ENCODE measurements at regions of chr2 and their contacts with region 1.

Region 1: DNA sequence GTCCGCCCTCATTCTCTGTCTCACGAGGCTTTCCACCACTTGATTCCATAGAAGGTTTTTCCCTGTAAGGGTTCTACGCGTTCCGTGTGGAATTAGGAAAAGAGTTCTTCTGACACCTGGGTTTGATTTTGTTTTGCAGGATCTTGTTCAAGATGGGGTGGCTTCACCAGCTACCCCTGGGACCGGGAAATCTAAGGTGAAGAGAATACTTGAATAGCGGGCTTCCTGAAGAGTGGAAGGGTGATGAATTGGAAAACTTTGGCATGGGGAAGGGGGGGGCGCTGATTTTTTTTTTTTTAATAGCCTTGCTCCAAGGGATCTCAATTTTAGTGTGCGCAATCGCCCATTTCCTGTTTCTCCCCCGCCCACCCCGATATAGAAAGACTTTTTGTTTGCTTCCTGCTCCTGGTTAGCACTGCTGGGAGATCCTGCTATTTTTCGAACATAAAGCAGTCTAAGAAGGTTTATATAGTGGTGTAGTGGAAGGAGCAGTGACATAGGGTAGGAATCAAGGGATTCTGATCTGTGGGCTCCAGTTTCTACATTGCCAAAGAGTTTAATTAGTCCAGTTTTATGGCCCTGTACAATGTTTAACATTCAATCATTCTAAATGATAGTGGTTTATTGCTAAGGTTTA is 606 bp downstream of the GCC2 start:
- ATAC-seq: peak in 2 of 8 experiments; percentile 1 to 2
- H3K4me3 ChIP-seq: peak overlapping the region; percentile 59 to 99 (median 77)
- H3K27ac ChIP-seq: peak overlapping the region; percentile 56 to 85
- H3K4me1 ChIP-seq: peaks cover 3 to 8% of the 10 kb centered on the region in 2 donors

Region 2: GRCh38 chr2:108220942-108221541 is 228.6 kb before region 1 on chr2:
- in situ Hi-C with region 1: loop called in 1 of 9 experiments (anchors 10 kb)
- ATAC-seq: no peak
- H3K4me3 ChIP-seq: no peak overlapping the region
- H3K27ac ChIP-seq: no peak overlapping the region
- H3K4me1 ChIP-seq: no peaks in the 10 kb centered on the region

Measured in motor neuron (in vitro differentiated cells).